Activated CD8-positive, alpha-beta T cell treated with anti-CD3 and anti-CD28 coated beads for 36 hours (primary cell): ENCODE measurements at regions of chr3 and their contacts with region 1.

Region 1: DNA sequence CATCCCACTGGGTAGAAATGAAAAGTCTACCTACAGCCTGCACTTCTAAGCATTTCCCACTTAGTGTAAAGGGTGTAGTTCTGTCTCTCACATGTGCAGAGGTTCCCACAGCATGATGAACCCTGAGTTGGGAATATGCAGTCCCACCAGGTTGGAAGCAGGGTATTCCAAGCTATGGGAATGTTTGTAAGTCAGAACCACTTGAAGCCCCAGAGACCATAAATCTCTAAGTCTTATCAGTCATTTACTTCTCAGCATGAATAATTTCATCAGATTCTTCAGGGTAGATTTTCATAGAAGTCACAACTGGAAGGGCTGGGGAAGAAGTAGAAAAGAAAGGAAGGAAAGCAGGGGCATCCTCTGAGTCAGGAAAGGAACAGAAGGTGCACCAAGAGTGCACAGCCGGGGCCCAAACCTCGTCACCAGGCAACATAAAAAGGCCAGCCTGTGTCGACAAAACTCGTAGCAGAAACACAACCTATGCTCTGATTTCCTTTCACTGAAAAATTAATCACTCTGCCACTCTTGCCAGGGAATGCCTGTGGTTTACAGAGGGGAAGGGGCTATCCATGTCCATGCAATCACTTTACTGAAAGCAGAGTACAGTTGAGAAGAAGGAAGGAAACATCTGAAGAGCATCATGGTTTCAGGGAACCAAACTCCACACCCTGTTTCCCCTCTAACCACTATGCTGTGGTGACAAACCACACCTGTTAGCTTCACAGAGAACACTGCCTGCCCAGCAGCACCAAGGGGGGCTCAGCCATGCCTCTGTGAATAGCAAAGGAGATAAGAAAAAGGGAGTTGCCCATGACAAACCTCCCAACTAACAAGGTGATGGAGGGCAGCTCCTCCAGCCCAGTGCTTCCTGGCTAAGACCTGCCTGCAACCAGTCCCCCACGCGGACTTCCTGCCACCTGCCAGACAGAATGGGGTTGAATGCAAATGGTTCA is 40.5 kb downstream of the SH3BP5 start:
- DNase-seq: peak; percentile 85
- ATAC-seq: peak; percentile 89
- H3K4me3 Mint-ChIP-seq: peak overlapping the region; percentile 31
- H3K27ac Mint-ChIP-seq: peak overlapping the region; percentile 70
- H3K4me1 Mint-ChIP-seq: peaks cover 38% of the 10 kb centered on the region
- H3K27me3 Mint-ChIP-seq: no peaks in the 10 kb centered on the region
- CTCF ChIP-seq: no peak

Region 2: GRCh38 chr3:15276028-15276724 is 15.7 kb before region 1 on chr3:
- CTCF ChIA-PET with region 1: interaction called, 18 read pairs
- POLR2A ChIA-PET with region 1: interaction called, 5 read pairs
- intact Hi-C with region 1: no loop called
- DNase-seq: no peak
- ATAC-seq: no peak
- H3K4me3 Mint-ChIP-seq: no peak overlapping the region
- H3K27ac Mint-ChIP-seq: peak overlapping the region; percentile 0
- H3K4me1 Mint-ChIP-seq: peaks cover 47% of the 10 kb centered on the region
- H3K27me3 Mint-ChIP-seq: peaks cover 6% of the 10 kb centered on the region
- CTCF ChIP-seq: no peak

Region 3: GRCh38 chr3:15309662-15310335 is 17.9 kb after region 1 on chr3:
- CTCF ChIA-PET with region 1: interaction called, 9 read pairs
- POLR2A ChIA-PET with region 1: interaction called, 6 read pairs
- intact Hi-C with region 1: loop called (anchors 2 kb)
- DNase-seq: peak; percentile 41
- ATAC-seq: peak; percentile 25
- H3K4me3 Mint-ChIP-seq: no peak overlapping the region
- H3K27ac Mint-ChIP-seq: peak overlapping the region; percentile 75
- H3K4me1 Mint-ChIP-seq: peaks cover 46% of the 10 kb centered on the region
- H3K27me3 Mint-ChIP-seq: no peaks in the 10 kb centered on the region
- CTCF ChIP-seq: no peak

Region 4: GRCh38 chr3:15440891-15441290 is 149.0 kb after region 1 on chr3:
- CTCF ChIA-PET with region 1: no interaction called
- POLR2A ChIA-PET with region 1: no interaction called
- intact Hi-C with region 1: no loop called
- DNase-seq: no peak
- ATAC-seq: no peak
- H3K4me3 Mint-ChIP-seq: no peak overlapping the region
- H3K27ac Mint-ChIP-seq: peak overlapping the region; percentile 60
- H3K4me1 Mint-ChIP-seq: peaks cover 8% of the 10 kb centered on the region
- H3K27me3 Mint-ChIP-seq: no peaks in the 10 kb centered on the region
- CTCF ChIP-seq: no peak

Region 5: DNA sequence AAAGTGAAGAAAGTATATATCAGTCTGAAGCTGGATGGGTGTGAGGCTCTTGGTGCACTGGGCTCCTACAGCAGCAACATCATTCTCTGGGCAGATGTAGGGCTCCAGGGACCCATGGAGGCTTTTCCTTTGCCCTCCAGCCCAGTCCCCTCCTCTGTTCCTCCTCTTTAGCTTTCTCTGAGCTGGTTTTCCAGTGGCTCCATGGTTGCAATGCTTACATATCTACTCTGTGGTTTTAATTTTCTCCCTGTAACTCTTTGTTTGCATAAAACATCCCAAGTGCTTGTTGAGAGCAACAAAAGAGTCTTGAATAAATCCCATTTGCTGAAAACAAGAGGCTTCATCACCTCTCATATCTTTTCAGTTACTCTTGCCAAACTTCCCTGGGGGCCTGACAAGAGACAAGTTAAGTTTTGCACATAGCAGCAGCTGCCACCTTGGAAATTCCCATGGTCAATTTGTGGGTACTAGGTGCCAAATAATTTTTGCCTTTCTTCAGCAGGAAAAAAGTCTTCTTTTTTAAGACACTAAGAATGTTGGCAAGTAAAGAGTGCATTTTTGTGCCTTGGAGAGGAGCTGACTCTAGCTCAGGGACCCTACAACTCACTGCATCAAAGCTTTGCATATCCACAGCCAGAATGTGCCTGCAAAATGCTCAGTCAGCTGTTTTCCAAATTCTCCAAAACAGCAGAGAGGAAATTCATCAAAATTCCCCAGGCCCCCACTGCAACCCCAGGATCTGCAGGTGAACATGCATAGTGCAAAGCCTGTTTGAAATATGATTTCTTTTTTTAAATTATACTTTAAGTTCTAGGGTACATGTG is 187.7 kb after region 1 on chr3:
- CTCF ChIA-PET with region 1: no interaction called
- POLR2A ChIA-PET with region 1: no interaction called
- intact Hi-C with region 1: no loop called
- DNase-seq: no peak
- ATAC-seq: no peak
- H3K4me3 Mint-ChIP-seq: no peak overlapping the region
- H3K27ac Mint-ChIP-seq: no peak overlapping the region
- H3K4me1 Mint-ChIP-seq: no peaks in the 10 kb centered on the region
- H3K27me3 Mint-ChIP-seq: no peaks in the 10 kb centered on the region
- CTCF ChIP-seq: no peak